Right cardiac atrium (tissue), 5 donors: ENCODE measurements at regions of chr14 and their contacts with region 1.

Region 1: DNA sequence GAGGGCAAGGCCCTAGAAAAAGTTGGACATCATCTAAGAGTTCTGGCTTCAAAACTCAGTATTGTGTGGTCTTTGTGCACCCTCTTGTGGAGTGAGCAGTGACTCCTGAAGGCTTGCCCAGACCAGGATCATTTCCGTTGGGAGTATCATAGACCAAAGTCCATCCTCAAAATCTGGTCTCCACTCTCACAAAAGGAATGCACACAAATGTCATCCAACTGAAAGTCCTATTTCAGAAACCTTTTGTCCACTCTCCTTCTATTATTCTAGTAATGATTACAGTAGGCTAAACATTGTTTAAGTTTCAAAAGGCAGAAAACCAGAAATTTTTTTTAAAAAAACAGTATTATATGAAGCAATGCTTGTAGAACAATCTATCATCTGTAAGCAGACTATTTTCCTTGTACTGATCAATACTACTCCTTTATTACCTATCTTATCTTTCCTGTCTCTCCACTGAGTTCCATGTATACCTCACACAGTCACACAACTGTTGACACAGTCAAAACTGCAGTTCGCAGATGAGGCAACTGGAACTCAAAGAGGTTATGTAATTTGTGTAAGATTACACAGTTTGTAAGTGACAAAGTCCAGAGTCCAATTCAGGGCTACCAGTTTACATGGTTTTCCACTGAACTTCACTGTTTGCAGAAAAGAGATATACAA is 41.4 kb downstream of the COX16 start:
- DNase-seq: no peak
- ATAC-seq: peak; percentile 55 to 70
- H3K4me3 ChIP-seq: no peak overlapping the region
- H3K27ac ChIP-seq: no peak overlapping the region
- H3K4me1 ChIP-seq: no peaks in the 10 kb centered on the region
- H3K27me3 ChIP-seq: no peaks in the 10 kb centered on the region

Region 2: GRCh38 chr14:69818757-69819191 is 499.3 kb before region 1 on chr14:
- intact Hi-C with region 1: loop called in 1 of 4 experiments (anchors 10 kb)
- DNase-seq: peak; percentile 22 to 66 (median 62)
- ATAC-seq: peak; percentile 33 to 82
- H3K4me3 ChIP-seq: no peak overlapping the region
- H3K27ac ChIP-seq: no peak overlapping the region
- H3K4me1 ChIP-seq: no peaks in the 10 kb centered on the region
- H3K27me3 ChIP-seq: no peaks in the 10 kb centered on the region

Region 3: GRCh38 chr14:70045844-70046535 is 272.1 kb before region 1 on chr14:
- intact Hi-C with region 1: loop called in 1 of 4 experiments (anchors 2 kb)
- DNase-seq: peak; percentile 70 to 86 (median 85)
- ATAC-seq: peak; percentile 90 to 91
- H3K4me3 ChIP-seq: no peak overlapping the region
- H3K27ac ChIP-seq: no peak overlapping the region
- H3K4me1 ChIP-seq: no peaks in the 10 kb centered on the region
- H3K27me3 ChIP-seq: no peaks in the 10 kb centered on the region

Region 4: DNA sequence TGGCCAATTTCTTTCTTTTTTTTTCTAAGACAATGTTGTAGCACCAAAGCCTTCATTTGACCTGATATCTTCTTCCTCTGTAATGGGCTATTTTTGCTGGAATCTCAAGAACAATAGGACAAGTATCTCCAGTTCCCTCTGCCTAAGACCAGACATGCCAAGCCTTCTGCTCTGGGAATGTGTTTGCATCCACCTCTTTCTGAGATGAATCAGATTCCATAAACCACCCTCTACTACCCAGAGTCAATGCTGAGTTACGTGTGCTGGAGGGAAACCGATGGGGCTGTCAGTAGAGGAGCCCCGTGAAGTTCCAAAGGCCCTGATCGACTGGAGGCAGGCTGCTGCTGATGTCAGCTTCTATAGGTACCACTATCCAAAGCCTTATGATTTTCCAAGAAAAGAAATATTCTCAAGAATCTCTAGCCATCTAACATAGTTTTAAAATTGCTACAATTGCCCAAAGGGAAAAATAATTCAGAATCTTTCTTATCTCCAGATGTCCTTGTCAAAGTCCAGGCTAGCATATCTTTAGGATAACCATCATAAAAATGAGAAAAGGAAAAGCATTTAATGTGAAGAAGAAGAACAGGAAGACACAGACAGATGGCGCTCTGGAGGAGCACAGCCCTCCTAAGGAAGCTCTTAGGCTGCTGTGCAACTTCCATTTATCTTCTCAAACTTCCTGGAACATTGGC is 231.3 kb before region 1 on chr14:
- intact Hi-C with region 1: loop called in 2 of 4 experiments (anchors 2 to 5 kb)
- DNase-seq: peak in 1 of 3 donors; percentile 38
- ATAC-seq: peak in 1 of 2 donors; percentile 43
- H3K4me3 ChIP-seq: no peak overlapping the region
- H3K27ac ChIP-seq: no peak overlapping the region
- H3K4me1 ChIP-seq: no peaks in the 10 kb centered on the region
- H3K27me3 ChIP-seq: peaks cover 2% of the 10 kb centered on the region